ENCODE measurements at regions of chr7 and their contacts with region 1.

Region 1: GRCh38 chr7:77587272-77587671 is 50.2 kb downstream of the PTPN12 start:
- DNase-seq: no peak
- ATAC-seq: no peak
- H3K4me3 ChIP-seq: no peak overlapping the region
- H3K27ac ChIP-seq: no peak overlapping the region
- H3K4me1 ChIP-seq: peaks cover 0 to 14% (median 7%) of the 10 kb centered on the region in 12 donors
- H3K27me3 ChIP-seq: no peaks in the 10 kb centered on the region
- CTCF ChIP-seq: no peak
- POLR2A ChIP-seq: no peak

Region 2: DNA sequence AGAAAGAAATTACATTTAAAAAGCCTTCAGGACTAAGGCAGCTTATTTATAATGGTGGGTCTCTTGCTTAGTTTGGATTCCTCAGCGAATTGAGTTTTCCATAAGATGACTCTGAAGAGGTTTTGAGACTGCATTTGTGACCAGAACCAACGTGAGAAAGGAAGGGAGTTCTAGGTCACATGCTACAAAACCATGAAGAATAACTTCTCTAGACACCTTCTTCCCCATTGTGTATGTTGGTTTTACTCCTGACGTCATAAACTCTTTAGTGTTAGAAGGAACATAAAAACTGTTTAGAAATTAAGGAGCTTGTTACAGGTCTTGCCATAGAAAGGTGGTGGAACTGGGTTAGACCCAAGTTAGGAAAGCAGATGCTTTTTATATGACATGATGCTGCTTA is 39.1 kb before region 1 on chr7:
- intact Hi-C with region 1: loop called in 1 of 10 experiments (anchors 5 kb)
- DNase-seq: no peak
- ATAC-seq: peak in 2 of 4 donors; percentile 14 to 53
- H3K4me3 ChIP-seq: no peak overlapping the region
- H3K27ac ChIP-seq: peak overlapping the region in 6 of 12 donors; percentile 10 to 58 (median 42)
- H3K4me1 ChIP-seq: peaks cover 0 to 97% (median 47%) of the 10 kb centered on the region in 12 donors
- H3K27me3 ChIP-seq: no peaks in the 10 kb centered on the region
- CTCF ChIP-seq: no peak
- POLR2A ChIP-seq: no peak

Region 3: GRCh38 chr7:77627309-77627676 is 40.0 kb after region 1 on chr7:
- intact Hi-C with region 1: no loop called
- DNase-seq: no peak
- ATAC-seq: no peak
- H3K4me3 ChIP-seq: no peak overlapping the region
- H3K27ac ChIP-seq: no peak overlapping the region
- H3K4me1 ChIP-seq: no peaks in the 10 kb centered on the region
- H3K27me3 ChIP-seq: no peaks in the 10 kb centered on the region
- CTCF ChIP-seq: no peak
- POLR2A ChIP-seq: no peak

Measured in heart left ventricle (tissue), 16 donors.